ENCODE measurements at regions of chr19 and their contacts with region 1.

Region 1: GRCh38 chr19:13117772-13118423 is at the start of gene NACC1:
- DNase-seq: peak; percentile 84 to 90 (median 88)
- H3K4me3 ChIP-seq: peak within 1 kb of the TSS; percentile 79 to 94
- H3K4me3 Mint-ChIP-seq: peak within 1 kb of the TSS; percentile 91 to 98 (median 96)
- H3K27ac ChIP-seq: peak within 1 kb of the TSS; percentile 65
- H3K27ac Mint-ChIP-seq: peak within 1 kb of the TSS; percentile 89 to 97 (median 92)
- H3K4me1 ChIP-seq: peaks cover 60% of the 10 kb centered on the region
- H3K4me1 Mint-ChIP-seq: peaks cover 22 to 67% (median 46%) of the 10 kb centered on the region in 4 donors
- H3K27me3 ChIP-seq: no peaks in the 10 kb centered on the region
- H3K27me3 Mint-ChIP-seq: no peaks in the 10 kb centered on the region
- total RNA-seq, gene NACC1: 25.8 to 34.1 TPM

Region 2: DNA sequence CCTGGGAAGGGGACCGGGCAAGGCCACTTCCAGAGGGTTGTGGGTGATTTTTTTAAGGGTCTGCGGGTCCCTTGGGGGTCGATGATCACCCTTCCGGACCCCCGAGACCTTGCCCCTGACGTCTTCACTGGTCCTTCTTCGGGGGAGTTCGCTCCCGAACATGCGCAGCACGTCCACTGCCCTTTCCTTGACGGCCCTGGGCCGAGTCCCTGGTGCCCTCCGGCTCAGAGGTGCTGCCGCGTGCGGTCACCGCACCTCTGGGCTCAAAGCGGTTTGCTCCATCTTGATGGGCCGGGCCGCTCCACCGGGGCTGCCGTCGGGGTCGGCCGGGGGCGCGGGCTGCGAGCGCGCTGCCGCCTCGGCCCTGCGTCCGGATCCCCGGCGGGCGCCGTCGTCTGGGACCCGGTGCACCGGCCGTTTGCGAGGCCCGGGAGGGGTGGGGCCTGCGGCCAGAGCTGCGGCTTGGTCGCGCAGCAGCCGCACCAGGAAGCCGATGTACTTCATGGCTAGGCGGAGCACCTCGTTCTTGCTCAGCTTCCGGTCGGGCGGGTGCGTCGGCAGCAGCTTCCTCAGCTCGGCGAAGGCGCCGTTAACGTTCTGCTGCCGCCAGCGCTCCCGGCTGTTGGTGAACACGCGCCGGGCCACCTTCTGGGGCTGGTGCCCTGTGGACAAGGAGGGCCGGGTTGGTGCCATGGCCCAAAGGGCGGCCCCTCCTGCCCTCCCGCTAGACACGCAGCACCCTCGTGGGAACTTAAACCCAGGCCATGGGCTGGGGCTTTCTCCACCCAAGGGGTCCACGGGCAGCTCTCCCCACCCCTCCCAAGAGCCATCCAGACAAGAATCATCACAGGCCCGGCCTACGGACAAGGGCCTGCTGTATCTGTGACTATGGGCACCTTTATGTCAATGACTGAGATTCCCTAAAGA is 18.6 kb before region 1 on chr19:
- CTCF ChIA-PET with region 1: interaction called, 35 read pairs
- POLR2A ChIA-PET with region 1: interaction called, 69 read pairs
- intact Hi-C with region 1: loop called (anchors 1 kb)
- DNase-seq: peak; percentile 82 to 88 (median 84)
- H3K4me3 ChIP-seq: peak overlapping the region; percentile 58 to 70
- H3K4me3 Mint-ChIP-seq: peak overlapping the region; percentile 84 to 92 (median 87)
- H3K27ac ChIP-seq: peak overlapping the region; percentile 78
- H3K27ac Mint-ChIP-seq: peak overlapping the region; percentile 84 to 99 (median 97)
- H3K4me1 ChIP-seq: peaks cover 87% of the 10 kb centered on the region
- H3K4me1 Mint-ChIP-seq: peaks cover 29 to 81% (median 48%) of the 10 kb centered on the region in 4 donors
- H3K27me3 ChIP-seq: peaks cover 15% of the 10 kb centered on the region
- H3K27me3 Mint-ChIP-seq: peaks cover 5 to 10% of the 10 kb centered on the region in 2 donors

Region 3: DNA sequence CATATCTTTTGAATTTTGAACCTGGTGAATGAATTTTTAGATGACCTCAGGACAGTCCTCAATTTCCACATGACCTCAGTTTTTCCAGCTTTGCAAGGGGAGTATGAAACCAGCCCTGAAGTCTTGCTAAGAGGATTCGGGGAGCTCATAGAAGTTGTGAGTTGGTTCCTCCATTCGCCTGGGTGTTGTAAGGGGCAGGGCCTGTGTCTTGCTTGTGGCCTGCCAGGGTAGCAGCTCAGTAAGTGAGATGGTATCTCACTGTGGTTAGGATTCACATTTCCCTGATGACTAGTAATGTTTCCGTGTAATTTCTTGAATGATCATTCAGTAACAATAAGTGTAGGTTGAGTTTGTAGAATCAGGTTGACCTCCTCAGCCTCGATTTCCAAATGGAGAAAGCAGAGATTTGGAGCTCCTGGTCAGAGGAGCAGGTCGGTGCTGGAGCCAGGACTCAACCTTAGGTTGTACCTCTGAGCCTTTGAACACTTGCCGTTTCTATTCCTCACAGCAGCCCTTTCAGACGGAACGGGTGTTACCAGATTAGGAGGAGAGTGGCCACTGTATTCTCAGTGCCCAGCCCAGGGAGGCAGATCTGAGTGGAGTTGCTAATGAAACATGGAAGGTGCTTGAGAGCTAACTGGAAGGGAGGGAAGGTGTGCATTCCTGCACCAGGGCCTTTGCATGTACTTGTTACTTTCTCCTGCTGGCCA is 14.7 kb after region 1 on chr19:
- CTCF ChIA-PET with region 1: no interaction called
- POLR2A ChIA-PET with region 1: interaction called, 19 read pairs
- intact Hi-C with region 1: loop called (anchors 2 kb)
- DNase-seq: peak; percentile 52 to 83 (median 61)
- H3K4me3 ChIP-seq: peak overlapping the region in 1 of 2 donors; percentile 1
- H3K4me3 Mint-ChIP-seq: peak overlapping the region; percentile 31 to 82 (median 65)
- H3K27ac ChIP-seq: no peak overlapping the region
- H3K27ac Mint-ChIP-seq: peak overlapping the region; percentile 66 to 90 (median 79)
- H3K4me1 ChIP-seq: peaks cover 34% of the 10 kb centered on the region
- H3K4me1 Mint-ChIP-seq: peaks cover 25 to 42% (median 30%) of the 10 kb centered on the region in 4 donors
- H3K27me3 ChIP-seq: no peaks in the 10 kb centered on the region
- H3K27me3 Mint-ChIP-seq: no peaks in the 10 kb centered on the region

Region 4: DNA sequence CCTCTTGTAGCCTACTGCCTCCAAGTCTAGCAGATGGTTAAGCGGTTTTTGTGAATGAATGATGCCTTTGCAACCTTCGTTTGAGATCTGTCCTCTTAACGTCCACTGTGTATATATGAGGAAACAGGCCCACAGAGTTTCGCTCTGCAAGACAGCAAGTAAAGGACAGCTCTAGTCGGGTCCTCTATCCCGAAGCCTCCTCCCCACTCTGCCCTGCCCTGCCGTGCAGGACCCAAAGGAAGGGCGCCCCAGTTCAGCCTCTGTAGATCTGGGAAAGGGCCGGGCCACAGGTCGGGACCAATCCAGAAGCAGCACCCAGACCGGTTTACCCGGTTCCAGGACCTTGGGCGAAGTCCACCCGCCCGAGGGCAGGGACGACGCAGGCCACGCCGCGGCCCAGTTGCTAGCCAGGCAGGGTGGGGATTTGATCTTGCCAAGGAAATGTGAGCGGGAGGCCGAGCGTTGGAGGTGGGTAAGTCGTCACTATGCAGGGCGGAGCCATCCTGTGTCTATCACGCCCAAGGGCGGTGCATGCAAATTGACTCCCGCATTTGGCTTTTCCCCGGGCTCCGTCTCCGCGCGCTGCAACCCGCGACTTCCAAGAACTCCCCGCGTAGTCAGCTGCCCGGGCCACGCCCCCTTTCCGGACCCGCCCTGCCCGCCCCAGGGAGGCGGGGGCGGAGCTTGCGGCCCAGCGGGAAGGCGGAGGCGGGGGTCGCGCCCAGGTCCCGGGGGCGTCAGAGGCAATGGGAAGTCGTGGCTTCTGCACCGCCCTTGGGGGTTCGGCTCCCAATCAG is 44.8 kb after region 1 on chr19:
- CTCF ChIA-PET with region 1: interaction called, 3 read pairs
- POLR2A ChIA-PET with region 1: interaction called, 29 read pairs
- intact Hi-C with region 1: no loop called
- DNase-seq: peak; percentile 69 to 89 (median 72)
- H3K4me3 ChIP-seq: peak overlapping the region; percentile 58 to 91
- H3K4me3 Mint-ChIP-seq: peak overlapping the region; percentile 83 to 91 (median 88)
- H3K27ac ChIP-seq: peak overlapping the region; percentile 82
- H3K27ac Mint-ChIP-seq: peak overlapping the region; percentile 94 to 99 (median 97)
- H3K4me1 ChIP-seq: peaks cover 96% of the 10 kb centered on the region
- H3K4me1 Mint-ChIP-seq: peaks cover 42 to 85% (median 63%) of the 10 kb centered on the region in 4 donors
- H3K27me3 ChIP-seq: no peaks in the 10 kb centered on the region
- H3K27me3 Mint-ChIP-seq: no peaks in the 10 kb centered on the region

Region 5: DNA sequence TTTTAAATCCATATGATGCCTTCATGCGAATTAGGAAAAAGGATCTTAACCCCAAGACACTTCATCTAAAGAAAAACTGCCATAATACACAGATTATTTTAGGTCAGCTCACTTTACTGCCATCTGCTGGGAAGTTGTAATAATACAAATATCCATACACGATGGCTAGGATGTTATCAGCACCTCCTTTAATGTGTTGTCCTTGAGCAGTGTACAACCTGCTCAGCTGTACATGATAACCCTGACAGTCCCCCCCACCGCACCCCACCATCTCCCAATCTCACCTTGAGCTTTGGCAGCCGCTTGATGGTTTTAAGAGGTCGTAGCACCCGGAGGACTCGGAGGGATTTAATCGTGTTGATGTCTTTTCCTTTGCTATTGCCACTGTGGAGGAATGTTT is 144.6 kb after region 1 on chr19:
- CTCF ChIA-PET with region 1: interaction called, 3 read pairs
- POLR2A ChIA-PET with region 1: interaction called, 3 read pairs
- intact Hi-C with region 1: loop called (anchors 5 kb)
- DNase-seq: peak in 4 of 5 donors; percentile 45 to 56 (median 51)
- H3K4me3 ChIP-seq: no peak overlapping the region
- H3K4me3 Mint-ChIP-seq: no peak overlapping the region
- H3K27ac ChIP-seq: no peak overlapping the region
- H3K27ac Mint-ChIP-seq: peak overlapping the region in 3 of 7 donors; percentile 35 to 59 (median 43)
- H3K4me1 ChIP-seq: no peaks in the 10 kb centered on the region
- H3K4me1 Mint-ChIP-seq: peaks cover 2 to 4% (median 3%) of the 10 kb centered on the region in 4 donors
- H3K27me3 ChIP-seq: no peaks in the 10 kb centered on the region
- H3K27me3 Mint-ChIP-seq: peaks cover 7 to 18% of the 10 kb centered on the region in 2 donors

Region 6: GRCh38 chr19:13899912-13900584 is 782.1 kb after region 1 on chr19:
- CTCF ChIA-PET with region 1: no interaction called
- POLR2A ChIA-PET with region 1: no interaction called
- intact Hi-C with region 1: no loop called
- DNase-seq: no peak
- H3K4me3 ChIP-seq: no peak overlapping the region
- H3K4me3 Mint-ChIP-seq: no peak overlapping the region
- H3K27ac ChIP-seq: no peak overlapping the region
- H3K27ac Mint-ChIP-seq: peak overlapping the region in 1 of 7 donors; percentile 60
- H3K4me1 ChIP-seq: no peaks in the 10 kb centered on the region
- H3K4me1 Mint-ChIP-seq: peaks cover 0 to 5% (median 1%) of the 10 kb centered on the region in 4 donors
- H3K27me3 ChIP-seq: no peaks in the 10 kb centered on the region
- H3K27me3 Mint-ChIP-seq: no peaks in the 10 kb centered on the region